Transverse colon (tissue), 4 donors: ENCODE measurements at regions of chr6 and their contacts with region 1.

Region 1: GRCh38 chr6:41602864-41603608 is 35.2 kb upstream of the MDFI start:
- DNase-seq: peak; percentile 84
- H3K4me3 ChIP-seq: peak overlapping the region in 1 of 4 donors; percentile 25
- H3K27ac ChIP-seq: peak overlapping the region in 3 of 4 donors; percentile 49 to 75 (median 60)
- H3K4me1 ChIP-seq: peaks cover 16 to 20% (median 18%) of the 10 kb centered on the region in 4 donors
- H3K27me3 ChIP-seq: no peaks in the 10 kb centered on the region
- CTCF ChIP-seq: peak; percentile 86 to 92 (median 88)
- EP300 ChIP-seq: no peak
- POLR2A ChIP-seq: no peak

Region 2: GRCh38 chr6:41367700-41368099 is 235.3 kb before region 1 on chr6:
- in situ Hi-C with region 1: loop called in 2 of 4 experiments (anchors 10 kb)
- intact Hi-C with region 1: loop called (anchors 5 kb)
- DNase-seq: peak; percentile 33
- H3K4me3 ChIP-seq: no peak overlapping the region
- H3K27ac ChIP-seq: no peak overlapping the region
- H3K4me1 ChIP-seq: peaks cover 6 to 20% (median 18%) of the 10 kb centered on the region in 4 donors
- H3K27me3 ChIP-seq: peaks cover 84% of the 10 kb centered on the region
- CTCF ChIP-seq: peak; percentile 23 to 52 (median 45)
- EP300 ChIP-seq: no peak
- POLR2A ChIP-seq: no peak